ENCODE measurements at regions of chr6 and their contacts with region 1.

Region 1: GRCh38 chr6:10434692-10435376 is 20.0 kb upstream of the TFAP2A start:
- DNase-seq: peak; percentile 71
- H3K4me3 Mint-ChIP-seq: peak overlapping the region; percentile 61
- H3K27ac Mint-ChIP-seq: peak overlapping the region; percentile 91
- H3K4me1 Mint-ChIP-seq: peaks cover 32% of the 10 kb centered on the region
- H3K27me3 Mint-ChIP-seq: no peaks in the 10 kb centered on the region
- CTCF ChIP-seq: peak; percentile 55

Region 2: GRCh38 chr6:8539446-8539845 is 1895.4 kb before region 1 on chr6:
- CTCF ChIA-PET with region 1: interaction called, 4 read pairs
- POLR2A ChIA-PET with region 1: interaction called, 4 read pairs
- intact Hi-C with region 1: loop called (anchors 5 kb)
- DNase-seq: peak; percentile 55
- H3K4me3 Mint-ChIP-seq: no peak overlapping the region
- H3K27ac Mint-ChIP-seq: peak overlapping the region; percentile 13
- H3K4me1 Mint-ChIP-seq: peaks cover 9% of the 10 kb centered on the region
- H3K27me3 Mint-ChIP-seq: no peaks in the 10 kb centered on the region
- CTCF ChIP-seq: peak; percentile 54

Region 3: GRCh38 chr6:8881663-8882062 is 1553.2 kb before region 1 on chr6:
- CTCF ChIA-PET with region 1: no interaction called
- POLR2A ChIA-PET with region 1: no interaction called
- intact Hi-C with region 1: no loop called
- DNase-seq: no peak
- H3K4me3 Mint-ChIP-seq: no peak overlapping the region
- H3K27ac Mint-ChIP-seq: no peak overlapping the region
- H3K4me1 Mint-ChIP-seq: no peaks in the 10 kb centered on the region
- H3K27me3 Mint-ChIP-seq: no peaks in the 10 kb centered on the region
- CTCF ChIP-seq: no peak

Region 4: DNA sequence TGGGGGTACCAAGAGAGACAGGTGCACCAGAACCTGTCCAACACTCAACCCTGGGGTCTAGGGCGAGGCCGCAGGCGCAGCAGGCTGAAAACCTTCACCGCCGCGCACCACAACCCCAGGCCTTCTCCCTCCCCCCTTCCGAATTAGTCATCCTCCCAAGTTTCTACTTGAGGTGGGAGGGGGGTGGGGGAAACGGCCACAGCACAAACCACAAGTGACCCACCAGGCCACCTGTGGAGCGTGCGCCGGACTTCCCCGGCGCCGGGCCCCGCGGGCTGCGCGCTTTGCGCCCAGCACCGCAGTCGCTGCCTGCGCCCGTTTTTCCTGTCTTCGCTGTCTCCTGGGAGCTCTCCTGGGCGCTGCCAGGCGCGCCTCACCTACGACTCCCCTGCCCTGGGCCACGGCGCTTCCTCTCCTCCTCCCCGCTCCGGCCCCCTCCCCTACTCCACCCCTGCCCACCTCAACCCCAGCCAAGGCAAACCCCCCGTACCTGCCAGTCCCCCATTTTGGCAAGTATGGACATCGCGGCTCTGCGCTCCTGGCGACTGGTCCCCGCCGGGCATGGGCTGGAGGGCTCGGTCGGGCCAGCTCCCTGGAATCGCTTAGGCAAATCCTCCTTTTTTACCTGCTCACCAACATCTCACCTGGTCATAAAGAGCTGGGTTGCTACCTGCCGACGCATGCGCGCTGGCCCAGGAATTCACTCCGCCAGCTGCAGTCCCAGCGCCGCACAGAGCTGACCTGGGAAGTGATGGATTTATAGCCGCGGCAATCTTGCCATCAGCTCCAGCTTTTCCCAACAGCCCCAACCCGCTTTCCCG is 15.7 kb before region 1 on chr6:
- CTCF ChIA-PET with region 1: interaction called, 50 read pairs
- POLR2A ChIA-PET with region 1: interaction called, 763 read pairs
- intact Hi-C with region 1: no loop called
- DNase-seq: peak; percentile 96
- H3K4me3 Mint-ChIP-seq: peak overlapping the region; percentile 94
- H3K27ac Mint-ChIP-seq: peak overlapping the region; percentile 99
- H3K4me1 Mint-ChIP-seq: peaks cover 24% of the 10 kb centered on the region
- H3K27me3 Mint-ChIP-seq: no peaks in the 10 kb centered on the region
- CTCF ChIP-seq: no peak

Region 5: GRCh38 chr6:10465629-10466504 is 31.0 kb after region 1 on chr6:
- CTCF ChIA-PET with region 1: interaction called, 16 read pairs
- POLR2A ChIA-PET with region 1: interaction called, 6 read pairs
- intact Hi-C with region 1: loop called (anchors 5 kb)
- DNase-seq: peak; percentile 69
- H3K4me3 Mint-ChIP-seq: no peak overlapping the region
- H3K27ac Mint-ChIP-seq: no peak overlapping the region
- H3K4me1 Mint-ChIP-seq: peaks cover 13% of the 10 kb centered on the region
- H3K27me3 Mint-ChIP-seq: no peaks in the 10 kb centered on the region
- CTCF ChIP-seq: peak; percentile 73

Measured in MCF 10A (cell line).